MCF 10A (cell line): ENCODE measurements at regions of chr1 and their contacts with region 1.

Region 1: DNA sequence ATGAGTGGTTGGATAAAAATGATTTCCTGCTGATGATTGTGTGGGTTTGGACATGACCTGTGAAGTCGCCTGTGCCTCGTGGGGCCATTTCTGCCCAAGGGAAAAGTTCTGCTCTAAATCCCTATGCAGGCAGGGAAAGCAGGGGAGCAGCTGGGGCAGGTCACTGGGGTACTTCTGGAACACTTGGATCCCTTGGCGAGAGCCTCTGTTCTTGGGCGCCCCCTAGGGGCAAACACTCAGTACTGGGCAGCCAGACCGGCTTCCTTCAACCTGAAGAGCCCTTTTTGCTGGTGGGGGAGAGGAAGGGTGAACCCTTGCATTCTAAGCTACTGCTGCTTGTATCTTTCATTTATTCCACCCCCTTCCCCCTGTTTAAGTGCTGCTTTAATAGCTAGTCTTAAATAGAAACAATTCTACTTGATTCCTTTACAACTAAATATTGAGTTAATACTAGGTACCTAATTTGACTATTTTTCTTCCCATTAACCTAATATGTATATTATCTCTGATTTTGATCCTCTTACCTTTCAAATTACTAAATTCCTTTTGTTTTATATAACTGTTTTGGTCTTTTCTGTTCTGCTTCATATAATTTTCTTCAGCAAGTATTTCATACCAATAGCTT is 5.1 kb upstream of the CLEC20A start:
- DNase-seq: peak; percentile 85
- H3K4me3 Mint-ChIP-seq: no peak overlapping the region
- H3K27ac Mint-ChIP-seq: no peak overlapping the region
- H3K4me1 Mint-ChIP-seq: no peaks in the 10 kb centered on the region
- H3K27me3 Mint-ChIP-seq: no peaks in the 10 kb centered on the region
- CTCF ChIP-seq: peak; percentile 98

Region 2: GRCh38 chr1:178020968-178021640 is 480.7 kb before region 1 on chr1:
- CTCF ChIA-PET with region 1: interaction called, 11 read pairs
- POLR2A ChIA-PET with region 1: no interaction called
- intact Hi-C with region 1: no loop called
- DNase-seq: no peak
- H3K4me3 Mint-ChIP-seq: no peak overlapping the region
- H3K27ac Mint-ChIP-seq: no peak overlapping the region
- H3K4me1 Mint-ChIP-seq: no peaks in the 10 kb centered on the region
- H3K27me3 Mint-ChIP-seq: no peaks in the 10 kb centered on the region
- CTCF ChIP-seq: no peak

Region 3: GRCh38 chr1:178310685-178311105 is 191.1 kb before region 1 on chr1:
- CTCF ChIA-PET with region 1: interaction called, 309 read pairs
- POLR2A ChIA-PET with region 1: interaction called, 13 read pairs
- intact Hi-C with region 1: loop called (anchors 2 kb)
- DNase-seq: peak; percentile 84
- H3K4me3 Mint-ChIP-seq: no peak overlapping the region
- H3K27ac Mint-ChIP-seq: peak overlapping the region; percentile 77
- H3K4me1 Mint-ChIP-seq: peaks cover 15% of the 10 kb centered on the region
- H3K27me3 Mint-ChIP-seq: no peaks in the 10 kb centered on the region
- CTCF ChIP-seq: peak; percentile 82

Region 4: GRCh38 chr1:178354816-178355215 is 147.0 kb before region 1 on chr1:
- CTCF ChIA-PET with region 1: interaction called, 13 read pairs
- POLR2A ChIA-PET with region 1: no interaction called
- intact Hi-C with region 1: no loop called
- DNase-seq: no peak
- H3K4me3 Mint-ChIP-seq: no peak overlapping the region
- H3K27ac Mint-ChIP-seq: no peak overlapping the region
- H3K4me1 Mint-ChIP-seq: peaks cover 13% of the 10 kb centered on the region
- H3K27me3 Mint-ChIP-seq: no peaks in the 10 kb centered on the region
- CTCF ChIP-seq: no peak

Region 5: DNA sequence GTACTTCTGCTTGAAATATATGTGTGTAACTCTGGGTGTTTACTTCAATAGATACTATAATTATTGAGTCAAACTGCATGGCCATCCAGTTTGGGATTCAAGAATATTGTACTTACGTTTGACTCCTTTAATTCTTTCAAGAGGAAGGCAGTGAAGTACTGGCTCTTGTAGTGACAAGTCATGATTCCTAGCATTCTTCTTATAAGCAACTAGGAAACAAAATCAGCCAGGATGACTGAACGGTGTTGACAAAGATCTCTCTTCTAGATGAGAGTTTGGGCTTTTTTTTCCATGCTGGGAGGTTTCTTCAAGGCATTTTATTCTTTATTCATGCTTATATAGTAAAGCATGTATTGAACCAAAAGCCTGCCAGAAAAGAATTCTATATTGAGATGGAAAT is 63.4 kb before region 1 on chr1:
- CTCF ChIA-PET with region 1: interaction called, 18 read pairs
- POLR2A ChIA-PET with region 1: no interaction called
- intact Hi-C with region 1: no loop called
- DNase-seq: no peak
- H3K4me3 Mint-ChIP-seq: no peak overlapping the region
- H3K27ac Mint-ChIP-seq: no peak overlapping the region
- H3K4me1 Mint-ChIP-seq: peaks cover 6% of the 10 kb centered on the region
- H3K27me3 Mint-ChIP-seq: no peaks in the 10 kb centered on the region
- CTCF ChIP-seq: no peak

Region 6: DNA sequence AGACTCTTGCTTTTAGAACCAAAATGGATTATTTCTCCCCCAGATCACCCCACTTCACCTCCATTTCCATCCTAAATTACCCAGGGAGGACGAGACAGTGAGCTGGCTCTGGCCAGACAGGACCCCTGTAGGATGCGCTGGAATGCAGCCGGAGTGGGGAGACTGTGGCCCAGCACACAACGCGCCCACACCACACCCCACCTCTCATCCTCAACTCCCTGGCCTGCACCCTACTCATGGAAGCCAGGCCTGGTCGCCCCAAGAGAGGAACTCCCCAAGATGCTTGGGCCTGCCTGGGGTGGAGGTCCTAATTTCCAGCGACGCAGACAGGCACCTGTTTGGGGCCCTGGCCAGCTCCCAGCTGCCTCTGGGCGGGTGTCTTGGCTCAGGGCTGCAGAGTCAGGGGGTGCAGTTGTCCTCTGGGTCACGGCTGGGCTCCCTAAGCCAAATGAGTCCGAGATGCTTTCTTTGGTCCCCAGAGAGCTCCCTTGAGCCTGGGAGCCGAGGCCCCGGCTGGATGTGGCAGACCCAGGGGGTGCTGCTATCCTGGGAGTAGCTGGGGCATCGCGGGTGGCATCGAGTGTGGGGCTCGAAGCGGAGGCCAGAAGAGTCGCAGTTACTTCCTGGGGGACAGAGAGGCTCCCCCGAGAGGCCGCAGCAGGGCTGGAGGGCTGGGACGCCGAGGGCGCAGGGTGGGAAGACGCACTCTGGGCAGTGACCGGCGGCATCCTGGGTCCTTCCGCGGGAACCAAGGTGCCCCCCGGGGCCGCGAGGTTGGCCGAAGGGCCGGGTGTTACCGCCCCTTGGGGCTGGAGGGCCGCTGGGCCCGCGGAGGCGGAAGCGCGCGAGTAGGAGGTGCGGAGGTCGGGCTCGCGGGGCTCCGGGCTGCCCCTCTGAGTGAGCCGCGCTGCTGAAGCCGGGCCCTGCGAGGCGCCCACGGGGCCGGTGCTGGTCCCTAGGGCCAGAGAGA is 15.4 kb before region 1 on chr1:
- CTCF ChIA-PET with region 1: interaction called, 92 read pairs
- POLR2A ChIA-PET with region 1: no interaction called
- intact Hi-C with region 1: no loop called
- DNase-seq: no peak
- H3K4me3 Mint-ChIP-seq: no peak overlapping the region
- H3K27ac Mint-ChIP-seq: no peak overlapping the region
- H3K4me1 Mint-ChIP-seq: no peaks in the 10 kb centered on the region
- H3K27me3 Mint-ChIP-seq: no peaks in the 10 kb centered on the region
- CTCF ChIP-seq: no peak

Region 7: DNA sequence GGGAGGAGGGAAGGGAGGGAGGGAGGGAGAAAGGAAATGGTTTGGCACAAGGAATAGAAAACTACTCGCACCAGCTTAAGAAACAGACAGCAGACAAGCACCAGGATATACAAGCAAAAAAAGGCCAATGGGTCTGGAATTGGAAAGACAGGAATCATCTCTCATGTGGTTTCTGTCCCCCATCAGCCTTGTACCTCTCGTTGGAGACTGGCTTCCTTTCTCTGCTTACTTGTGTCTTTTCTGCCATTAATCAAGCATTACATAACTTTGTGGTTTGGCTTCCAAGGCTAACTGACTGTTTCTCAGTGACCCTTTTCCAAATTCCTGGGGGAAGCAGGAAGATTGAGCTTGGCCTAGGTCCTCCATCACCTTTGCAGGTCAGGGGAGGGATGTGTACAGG is 211.4 kb after region 1 on chr1:
- CTCF ChIA-PET with region 1: no interaction called
- POLR2A ChIA-PET with region 1: no interaction called
- intact Hi-C with region 1: no loop called
- DNase-seq: peak; percentile 32
- H3K4me3 Mint-ChIP-seq: no peak overlapping the region
- H3K27ac Mint-ChIP-seq: no peak overlapping the region
- H3K4me1 Mint-ChIP-seq: peaks cover 6% of the 10 kb centered on the region
- H3K27me3 Mint-ChIP-seq: no peaks in the 10 kb centered on the region
- CTCF ChIP-seq: no peak